Sigmoid colon (tissue), 7 donors: ENCODE measurements at regions of chr18 and their contacts with region 1.

Region 1: DNA sequence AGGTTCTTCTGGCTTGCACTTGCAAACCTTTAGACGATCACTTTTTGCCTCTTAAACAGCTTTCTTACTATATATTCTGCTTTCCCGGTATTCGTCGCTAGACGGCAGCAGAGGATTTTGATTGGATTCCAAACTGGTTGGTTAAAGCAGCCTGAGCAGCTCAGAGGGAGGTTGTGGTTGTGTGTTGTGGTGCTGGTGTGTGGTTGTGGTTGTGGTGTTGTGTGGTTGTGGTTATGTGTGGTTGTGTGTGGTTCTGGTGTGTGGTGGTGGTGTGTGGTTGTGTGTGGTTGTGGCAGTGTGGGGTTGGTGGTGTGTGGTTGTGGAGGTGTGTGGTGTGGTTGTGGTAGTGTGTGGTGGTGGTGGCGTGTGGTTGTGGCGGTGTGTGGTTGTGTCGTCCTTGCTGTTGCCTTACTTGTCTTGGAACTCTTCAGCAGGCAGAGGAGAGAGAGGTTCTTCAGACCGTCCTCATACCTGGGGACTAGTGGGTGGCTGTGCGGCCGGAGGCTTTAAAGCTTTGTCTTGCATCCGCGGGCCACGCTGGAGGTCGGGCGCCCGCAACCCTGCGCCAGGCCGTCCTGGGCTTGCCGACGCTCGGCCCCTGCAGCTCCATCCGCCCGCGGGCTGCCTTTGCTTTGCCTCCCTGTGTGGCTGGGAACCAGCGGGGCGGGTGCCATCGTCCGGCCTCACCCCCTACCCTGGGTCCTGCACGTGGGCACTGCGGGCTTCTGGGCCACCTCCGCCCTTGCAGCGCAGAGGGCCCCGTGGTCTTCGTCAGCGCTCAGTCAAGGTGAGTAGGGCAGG is 190.8 kb downstream of the ARHGAP28 start:
- DNase-seq: no peak
- H3K4me3 ChIP-seq: no peak overlapping the region
- H3K27ac ChIP-seq: no peak overlapping the region
- H3K4me1 ChIP-seq: no peaks in the 10 kb centered on the region
- H3K27me3 ChIP-seq: no peaks in the 10 kb centered on the region
- CTCF ChIP-seq: peak; percentile 37 to 68 (median 56)
- EP300 ChIP-seq: no peak
- POLR2A ChIP-seq: no peak

Region 2: GRCh38 chr18:6764382-6764781 is 155.9 kb before region 1 on chr18:
- intact Hi-C with region 1: no loop called
- DNase-seq: no peak
- H3K4me3 ChIP-seq: no peak overlapping the region
- H3K27ac ChIP-seq: peak overlapping the region in 2 of 4 donors; percentile 64 to 68
- H3K4me1 ChIP-seq: no peaks in the 10 kb centered on the region
- H3K27me3 ChIP-seq: no peaks in the 10 kb centered on the region
- CTCF ChIP-seq: no peak
- EP300 ChIP-seq: no peak
- POLR2A ChIP-seq: no peak

Region 3: DNA sequence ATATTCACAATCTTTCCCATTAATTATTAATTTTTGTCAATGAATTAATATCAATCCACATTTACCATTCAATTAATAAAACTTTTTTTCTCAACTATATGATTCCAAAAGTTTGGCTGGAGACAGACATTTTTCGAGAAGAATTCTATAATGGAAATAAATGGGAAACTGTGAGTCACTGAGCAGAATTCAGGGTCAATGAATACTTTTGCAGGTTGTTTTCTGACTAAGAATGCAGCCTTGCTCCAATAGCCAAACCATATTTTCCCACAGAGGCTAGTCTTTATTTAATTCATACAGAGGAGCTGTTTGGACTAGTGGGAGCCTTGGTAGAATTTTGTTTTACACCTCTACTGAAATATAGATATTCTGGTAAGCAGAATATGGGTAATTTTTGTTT is 108.5 kb before region 1 on chr18:
- intact Hi-C with region 1: no loop called
- DNase-seq: no peak
- H3K4me3 ChIP-seq: no peak overlapping the region
- H3K27ac ChIP-seq: no peak overlapping the region
- H3K4me1 ChIP-seq: peaks cover 0 to 10% (median 4%) of the 10 kb centered on the region in 4 donors
- H3K27me3 ChIP-seq: no peaks in the 10 kb centered on the region
- CTCF ChIP-seq: no peak
- EP300 ChIP-seq: no peak
- POLR2A ChIP-seq: no peak

Region 4: GRCh38 chr18:7000484-7001096 is 80.3 kb after region 1 on chr18:
- intact Hi-C with region 1: loop called (anchors 10 kb)
- DNase-seq: no peak
- H3K4me3 ChIP-seq: no peak overlapping the region
- H3K27ac ChIP-seq: no peak overlapping the region
- H3K4me1 ChIP-seq: no peaks in the 10 kb centered on the region
- H3K27me3 ChIP-seq: no peaks in the 10 kb centered on the region
- CTCF ChIP-seq: peak in 3 of 4 experiments; percentile 12 to 35 (median 29)
- EP300 ChIP-seq: no peak
- POLR2A ChIP-seq: no peak

Region 5: GRCh38 chr18:7038330-7038851 is 118.1 kb after region 1 on chr18:
- intact Hi-C with region 1: no loop called
- DNase-seq: peak; percentile 96
- H3K4me3 ChIP-seq: peak overlapping the region in 3 of 4 donors; percentile 19 to 34 (median 25)
- H3K27ac ChIP-seq: peak overlapping the region; percentile 60 to 77 (median 67)
- H3K4me1 ChIP-seq: peaks cover 0 to 5% (median 4%) of the 10 kb centered on the region in 4 donors
- H3K27me3 ChIP-seq: no peaks in the 10 kb centered on the region
- CTCF ChIP-seq: peak; percentile 60 to 75 (median 72)
- EP300 ChIP-seq: peak in 3 of 4 donors; percentile 67 to 90 (median 87)
- POLR2A ChIP-seq: no peak

Region 6: GRCh38 chr18:7177116-7177744 is 256.9 kb after region 1 on chr18:
- intact Hi-C with region 1: loop called (anchors 1 kb)
- DNase-seq: peak; percentile 74
- H3K4me3 ChIP-seq: no peak overlapping the region
- H3K27ac ChIP-seq: no peak overlapping the region
- H3K4me1 ChIP-seq: no peaks in the 10 kb centered on the region
- H3K27me3 ChIP-seq: peaks cover 0 to 5% (median 0%) of the 10 kb centered on the region in 3 donors
- CTCF ChIP-seq: peak in 3 of 4 experiments; percentile 49 to 76 (median 68)
- EP300 ChIP-seq: no peak
- POLR2A ChIP-seq: no peak